HepG2 (cell line): ENCODE measurements at regions of chr11 and their contacts with region 1.

Region 1: DNA sequence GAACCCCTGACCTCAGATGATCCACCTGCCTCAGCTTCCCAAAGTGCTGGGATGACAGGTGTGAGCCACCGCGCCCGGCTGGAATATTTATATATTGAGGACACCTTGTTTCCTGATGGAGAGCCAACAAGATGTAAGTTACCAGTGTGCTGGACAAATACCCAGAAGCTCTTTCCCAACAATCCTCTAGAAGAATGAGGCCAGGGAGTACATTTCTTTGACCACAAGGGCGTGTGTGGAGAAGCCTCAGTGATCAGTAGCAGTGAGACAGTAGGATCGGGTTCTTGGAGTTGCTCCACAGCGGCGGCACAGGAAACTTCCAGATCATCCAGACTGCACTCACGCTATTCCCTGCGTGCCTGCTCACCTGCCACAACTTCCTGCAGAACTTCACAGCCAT is 10.3 kb upstream of the POLA2 start:
- DNase-seq: no peak
- ATAC-seq: no peak
- H3K4me3 ChIP-seq: no peak overlapping the region
- H3K27ac ChIP-seq: no peak overlapping the region
- H3K4me1 ChIP-seq: peaks cover 19% of the 10 kb centered on the region
- H3K27me3 ChIP-seq: no peaks in the 10 kb centered on the region
- CTCF ChIP-seq: no peak
- EP300 ChIP-seq: no peak
- POLR2A ChIP-seq: no peak
- RAD21 ChIP-seq: no peak

Region 2: GRCh38 chr11:65204646-65205601 is 46.6 kb before region 1 on chr11:
- CTCF ChIA-PET with region 1: interaction called, 7 read pairs
- POLR2A ChIA-PET with region 1: no interaction called
- in situ Hi-C with region 1: no loop called
- intact Hi-C with region 1: loop called (anchors 2 kb)
- DNase-seq: peak; percentile 37
- ATAC-seq: peak; percentile 84
- H3K4me3 ChIP-seq: no peak overlapping the region
- H3K27ac ChIP-seq: no peak overlapping the region
- H3K4me1 ChIP-seq: no peaks in the 10 kb centered on the region
- H3K27me3 ChIP-seq: no peaks in the 10 kb centered on the region
- CTCF ChIP-seq: peak; percentile 89
- EP300 ChIP-seq: no peak
- POLR2A ChIP-seq: no peak
- RAD21 ChIP-seq: peak; percentile 83

Region 3: GRCh38 chr11:65215441-65216076 is 35.9 kb before region 1 on chr11:
- CTCF ChIA-PET with region 1: no interaction called
- POLR2A ChIA-PET with region 1: no interaction called
- in situ Hi-C with region 1: loop called (anchors 5 kb)
- intact Hi-C with region 1: no loop called
- DNase-seq: no peak
- ATAC-seq: peak; percentile 7; the same call in 2 of the 3 replicates
- H3K4me3 ChIP-seq: no peak overlapping the region
- H3K27ac ChIP-seq: no peak overlapping the region
- H3K4me1 ChIP-seq: peaks cover 9% of the 10 kb centered on the region
- H3K27me3 ChIP-seq: peaks cover 0 to 4% of the 10 kb centered on the region in 2 experiments; a peak in 1 of 5 replicates
- CTCF ChIP-seq: no peak
- EP300 ChIP-seq: no peak
- POLR2A ChIP-seq: no peak
- RAD21 ChIP-seq: no peak

Region 4: DNA sequence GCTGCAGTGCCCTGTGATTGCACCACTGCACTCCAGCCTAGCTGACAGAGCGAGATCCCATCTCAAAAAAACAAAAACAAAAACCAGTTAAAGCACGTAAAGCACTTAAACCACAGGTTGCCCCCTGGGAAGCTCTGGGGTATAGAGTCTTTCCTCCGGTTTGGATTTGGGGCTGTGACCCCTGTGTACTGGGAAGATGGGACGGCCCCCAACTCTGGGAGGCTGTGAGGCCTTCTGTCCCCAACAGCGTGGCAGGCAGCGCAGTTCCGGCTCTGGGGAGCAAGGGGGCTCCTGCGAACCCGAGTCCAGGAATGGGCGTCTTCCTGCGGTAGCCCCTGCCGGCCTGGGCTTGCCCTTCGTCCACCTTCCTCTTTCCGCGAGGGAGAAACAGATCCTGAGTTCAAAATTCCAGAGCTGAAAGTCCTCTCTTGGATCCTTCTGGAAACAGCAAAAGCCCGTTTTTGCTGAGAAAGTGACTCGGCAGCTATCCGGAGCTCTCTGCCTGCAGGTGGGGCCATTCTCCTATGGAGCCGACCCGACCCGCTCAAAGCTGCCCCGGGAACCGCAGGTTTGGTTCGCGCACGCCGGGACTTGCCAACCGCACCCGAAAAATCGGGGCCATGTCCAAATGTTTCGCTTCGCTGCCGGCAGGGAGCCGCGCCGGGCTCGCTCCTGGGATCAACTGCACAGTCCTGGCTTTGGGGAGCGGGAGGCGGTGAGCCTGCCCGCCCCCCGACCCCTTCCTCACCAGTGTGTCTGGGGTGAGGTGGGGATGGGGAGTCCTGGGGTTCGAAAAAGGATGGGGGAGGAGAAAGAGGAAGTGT is 26.0 kb before region 1 on chr11:
- CTCF ChIA-PET with region 1: interaction called, 20 read pairs
- POLR2A ChIA-PET with region 1: interaction called, 5 read pairs
- in situ Hi-C with region 1: no loop called
- intact Hi-C with region 1: loop called (anchors 1 kb)
- DNase-seq: peak; percentile 47
- ATAC-seq: peak; percentile 92
- H3K4me3 ChIP-seq: peak overlapping the region; percentile 66 to 79 (median 66)
- H3K27ac ChIP-seq: no peak overlapping the region
- H3K4me1 ChIP-seq: peaks cover 19% of the 10 kb centered on the region
- H3K27me3 ChIP-seq: peaks cover 0 to 8% of the 10 kb centered on the region in 2 experiments; a peak in 1 of 5 replicates
- CTCF ChIP-seq: peak; percentile 87
- EP300 ChIP-seq: no peak
- POLR2A ChIP-seq: no peak
- RAD21 ChIP-seq: peak; percentile 85

Region 5: GRCh38 chr11:65429724-65430405 is 178.4 kb after region 1 on chr11:
- CTCF ChIA-PET with region 1: no interaction called
- POLR2A ChIA-PET with region 1: no interaction called
- in situ Hi-C with region 1: no loop called
- intact Hi-C with region 1: no loop called
- DNase-seq: no peak
- ATAC-seq: peak; percentile 16
- H3K4me3 ChIP-seq: peak overlapping the region in 1 of 3 experiments; percentile 42; a peak in 2 of 6 replicates
- H3K27ac ChIP-seq: peak overlapping the region; percentile 41
- H3K4me1 ChIP-seq: peaks cover 81% of the 10 kb centered on the region
- H3K27me3 ChIP-seq: no peaks in the 10 kb centered on the region; a peak in 1 of 5 replicates
- CTCF ChIP-seq: no peak
- EP300 ChIP-seq: no peak
- POLR2A ChIP-seq: peak; percentile 57 to 93
- RAD21 ChIP-seq: peak; percentile 31; the same call in 1 of the 2 replicates